ENCODE measurements at regions of chr2 and their contacts with region 1.

Region 1: DNA sequence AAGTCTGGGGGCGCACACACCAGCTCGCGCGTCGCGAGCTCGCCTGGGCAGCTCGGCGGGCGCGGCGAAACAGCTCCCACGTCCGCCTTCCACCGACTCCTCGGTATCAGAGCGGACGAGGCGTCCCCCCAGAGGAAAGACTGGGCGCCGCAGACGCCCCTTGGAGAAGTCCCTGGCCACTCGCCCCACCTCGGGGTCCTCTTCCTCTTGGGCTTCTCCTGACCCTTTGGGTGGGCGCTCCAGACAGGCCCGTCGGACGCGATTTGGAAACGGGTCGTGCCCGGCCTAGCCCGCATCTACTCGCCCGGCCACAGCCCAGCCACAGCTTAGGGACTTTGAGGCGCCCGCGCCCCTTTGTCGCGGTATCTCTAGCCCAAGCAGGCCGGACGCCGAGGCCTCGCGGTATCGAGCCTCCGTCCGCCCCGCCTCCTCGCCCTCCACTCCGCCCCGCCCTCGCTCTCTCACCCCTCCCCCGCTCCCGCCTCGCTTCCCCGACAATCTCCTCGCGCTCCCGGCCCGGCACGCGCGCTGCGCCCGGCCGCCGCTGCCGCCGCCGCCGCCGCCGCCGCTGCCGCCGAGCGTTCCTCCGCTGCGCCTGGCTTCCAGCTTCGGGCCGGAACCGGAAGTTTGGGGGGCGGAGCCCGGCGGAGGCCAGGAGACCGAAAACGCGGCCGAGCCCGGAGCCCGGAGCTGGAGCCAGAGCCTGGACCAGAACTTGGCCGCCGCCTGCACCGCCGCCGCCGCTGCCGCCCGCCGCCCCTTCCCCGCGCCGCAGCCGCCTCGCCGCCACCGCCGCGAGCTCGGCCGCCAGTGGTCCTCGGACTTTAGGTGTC is 749 bp upstream of the ACVR2A start:
- DNase-seq: peak; percentile 47 to 95
- H3K4me3 ChIP-seq: peak overlapping the region; percentile 83 to 91
- H3K27ac ChIP-seq: peak overlapping the region; percentile 97 to 98
- H3K4me1 ChIP-seq: peaks cover 0 to 16% of the 10 kb centered on the region in 2 donors
- H3K27me3 ChIP-seq: no peaks in the 10 kb centered on the region
- CTCF ChIP-seq: peak in 2 of 3 experiments; percentile 27 to 31

Region 2: DNA sequence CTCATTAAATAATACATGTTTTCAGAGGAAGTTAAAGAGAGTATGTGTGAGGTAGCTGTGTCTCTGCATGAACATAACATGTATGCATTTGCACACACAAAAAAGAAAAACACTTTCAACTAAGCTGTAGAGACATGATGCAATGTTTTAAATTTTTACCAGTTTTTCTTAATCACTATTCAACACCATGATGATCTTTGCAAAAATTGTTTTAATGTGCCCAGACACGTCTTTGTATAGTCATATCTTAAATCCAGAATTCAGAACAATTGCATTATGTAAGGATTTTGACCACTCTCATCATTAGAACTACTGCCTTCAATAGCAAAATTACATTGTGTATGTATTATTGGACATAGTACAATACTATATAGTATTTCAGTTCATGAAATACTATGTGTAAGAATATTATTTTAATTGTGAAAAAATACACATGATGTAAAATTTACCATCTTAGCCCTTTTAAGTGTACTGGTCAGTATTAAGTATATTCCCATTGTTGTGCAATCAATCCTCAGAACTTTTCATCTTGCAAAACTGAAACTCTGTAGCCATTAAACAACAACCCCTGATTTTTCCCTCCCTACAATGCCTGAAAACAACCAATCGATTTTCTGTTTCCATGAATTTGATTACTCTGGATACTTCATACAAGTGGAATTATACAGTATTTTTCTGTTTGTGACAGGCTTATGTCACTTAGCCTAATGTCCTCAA is 103.7 kb before region 1 on chr2:
- intact Hi-C with region 1: no loop called
- DNase-seq: no peak
- H3K4me3 ChIP-seq: no peak overlapping the region
- H3K27ac ChIP-seq: no peak overlapping the region
- H3K4me1 ChIP-seq: no peaks in the 10 kb centered on the region
- H3K27me3 ChIP-seq: no peaks in the 10 kb centered on the region
- CTCF ChIP-seq: no peak

Region 3: GRCh38 chr2:147882631-147883030 is 38.6 kb after region 1 on chr2:
- intact Hi-C with region 1: no loop called
- DNase-seq: no peak
- H3K4me3 ChIP-seq: no peak overlapping the region
- H3K27ac ChIP-seq: no peak overlapping the region
- H3K4me1 ChIP-seq: no peaks in the 10 kb centered on the region
- H3K27me3 ChIP-seq: no peaks in the 10 kb centered on the region
- CTCF ChIP-seq: no peak

Region 4: DNA sequence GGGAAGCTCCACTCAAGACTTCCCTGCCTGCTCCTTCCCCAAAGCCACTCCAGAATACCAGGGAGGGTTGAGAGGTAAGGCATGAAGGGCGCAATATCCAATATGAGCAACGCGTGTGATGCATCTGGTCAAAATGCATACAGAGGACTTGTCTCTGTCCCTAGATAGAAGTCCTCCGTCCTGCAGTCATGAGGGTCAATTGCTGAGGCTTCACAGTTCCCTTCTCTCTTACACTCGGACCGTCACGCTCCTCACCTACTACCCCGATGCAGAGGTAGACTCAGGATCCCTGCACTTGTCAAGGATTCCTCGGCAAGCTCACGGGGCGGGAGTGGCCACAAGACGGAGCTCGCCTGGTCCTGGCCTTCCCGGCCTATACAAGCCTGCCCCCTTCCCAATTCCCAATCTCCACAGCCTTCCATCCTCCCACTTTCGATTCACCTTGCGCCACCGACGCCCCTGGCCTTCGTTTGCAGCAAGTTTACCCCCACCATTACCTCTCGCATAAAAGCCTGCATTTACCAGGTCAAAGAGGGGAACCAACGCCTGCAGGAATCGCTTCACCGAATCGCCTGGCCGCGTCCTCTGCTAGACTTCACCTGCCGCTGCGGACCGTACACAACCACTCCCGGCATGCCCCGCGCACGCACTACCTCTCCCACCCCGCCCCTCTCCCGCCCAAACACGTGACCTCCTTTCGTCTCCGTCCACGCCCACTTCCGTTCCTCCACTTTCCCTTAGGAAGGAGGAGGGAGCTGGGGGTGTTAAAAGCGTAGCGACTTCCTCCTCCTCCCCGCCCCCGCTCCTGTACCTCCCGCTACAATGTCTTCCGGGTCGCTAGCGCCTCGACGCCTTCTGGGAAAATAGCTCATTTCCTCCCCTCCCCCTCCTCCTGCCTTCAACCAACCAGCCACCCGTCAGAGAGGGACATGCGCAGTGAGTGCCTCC is 176.3 kb after region 1 on chr2 and contains the start of gene ORC4:
- intact Hi-C with region 1: loop called (anchors 2 kb)
- DNase-seq: peak; percentile 91 to 99
- H3K4me3 ChIP-seq: peak within 1 kb of the TSS; percentile 81 to 86
- H3K27ac ChIP-seq: peak within 1 kb of the TSS; percentile 89 to 91
- H3K4me1 ChIP-seq: peaks cover 3 to 15% of the 10 kb centered on the region in 2 donors
- H3K27me3 ChIP-seq: no peaks in the 10 kb centered on the region
- CTCF ChIP-seq: peak in 2 of 3 experiments; percentile 17 to 43
- total RNA-seq, gene ORC4: 79.6 TPM

Measured in ascending aorta (tissue), 2 donors.